ENCODE measurements at regions of chr2 and their contacts with region 1.

Region 1: DNA sequence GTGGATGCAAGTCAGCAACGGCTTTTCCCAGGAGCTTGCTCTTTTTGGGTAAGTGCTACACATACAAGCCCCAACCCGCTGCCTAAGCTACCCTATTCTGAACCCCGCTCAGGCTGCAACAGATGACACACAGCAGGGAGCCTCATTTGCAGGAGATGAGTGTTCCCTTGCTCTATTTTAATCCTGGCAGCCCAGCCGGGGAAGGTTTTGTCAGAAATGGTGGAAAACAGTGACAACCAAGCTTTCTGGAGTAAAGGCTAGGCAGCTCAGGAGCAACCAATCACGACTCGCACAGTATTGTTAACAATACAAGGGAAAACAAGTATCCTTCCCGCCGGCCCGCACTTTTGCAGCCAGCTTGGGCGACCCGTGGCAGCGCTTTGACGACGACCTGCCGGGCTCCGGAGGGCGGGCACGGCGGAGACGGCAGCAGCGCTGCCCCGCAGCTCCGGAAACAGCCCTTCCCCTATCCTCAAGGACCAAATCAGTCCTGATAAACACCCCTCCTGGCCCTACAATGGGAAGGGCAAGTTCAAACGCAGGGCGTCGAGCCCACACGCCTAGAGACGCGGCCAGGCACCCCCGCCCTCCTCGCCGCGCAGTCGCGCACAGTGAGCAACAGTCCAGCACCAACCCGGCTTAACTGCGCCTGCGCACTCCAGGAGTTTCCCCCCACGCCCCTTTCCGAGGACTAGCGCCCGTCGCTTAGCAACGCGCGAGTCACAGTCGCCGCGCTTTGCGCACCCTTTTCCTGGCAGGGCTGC is 74.3 kb upstream of the TSPYL6 start:
- DNase-seq: peak; percentile 99
- H3K4me3 ChIP-seq: peak overlapping the region; percentile 45 to 67 (median 60)
- H3K27ac ChIP-seq: peak overlapping the region; percentile 84 to 95 (median 91)
- H3K4me1 ChIP-seq: peaks cover 0 to 18% (median 12%) of the 10 kb centered on the region in 4 donors
- H3K27me3 ChIP-seq: no peaks in the 10 kb centered on the region
- CTCF ChIP-seq: no peak
- EP300 ChIP-seq: peak in 1 of 4 donors; percentile 54
- POLR2A ChIP-seq: peak; percentile 75 to 86

Region 2: DNA sequence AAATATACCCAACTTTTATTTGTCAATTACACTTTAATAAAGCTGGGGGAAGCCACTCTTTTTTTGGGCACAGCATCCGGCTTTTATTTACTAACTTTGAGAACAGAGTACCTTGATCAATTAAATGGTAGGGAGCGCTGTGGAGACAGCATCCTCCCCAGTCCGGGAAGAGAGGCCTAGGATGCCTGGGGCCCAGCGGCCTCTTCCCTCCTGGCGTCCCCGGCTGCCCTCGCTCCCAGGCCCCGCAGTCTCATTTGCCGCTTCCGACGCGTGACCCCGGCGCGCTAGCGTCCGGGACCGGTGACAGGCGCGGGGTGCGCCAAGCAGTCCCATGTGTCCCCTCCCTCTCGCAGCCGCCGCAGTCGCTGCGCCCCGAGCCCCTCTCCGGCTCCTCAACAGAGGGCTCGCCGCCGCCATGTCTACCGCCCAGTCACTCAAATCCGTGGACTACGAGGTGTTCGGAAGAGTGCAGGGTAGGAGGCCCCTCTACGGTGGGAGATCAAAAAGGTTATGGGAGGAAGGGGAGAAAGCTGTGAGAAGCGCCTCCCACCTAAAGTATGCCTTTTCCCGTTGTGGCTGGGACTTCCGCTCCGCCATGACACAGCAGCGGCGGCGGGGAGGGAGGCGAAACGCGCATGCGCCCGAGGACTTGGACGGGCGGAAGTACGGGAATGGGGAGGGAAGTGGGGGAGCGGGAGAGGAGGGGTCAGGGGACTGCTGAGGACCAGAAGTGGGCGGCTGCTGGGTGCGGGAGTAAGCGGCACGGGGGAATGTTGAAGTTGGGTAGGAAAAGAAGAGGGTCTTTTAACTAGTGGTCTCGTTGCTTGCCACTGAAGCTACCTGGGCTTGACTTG is 214.8 kb before region 1 on chr2 and contains the start of gene ACYP2:
- intact Hi-C with region 1: loop called (anchors 10 kb)
- DNase-seq: peak; percentile 98
- H3K4me3 ChIP-seq: peak within 1 kb of the TSS; percentile 60 to 78 (median 72)
- H3K27ac ChIP-seq: peak within 1 kb of the TSS; percentile 92 to 98 (median 96)
- H3K4me1 ChIP-seq: peaks cover 0 to 12% (median 5%) of the 10 kb centered on the region in 4 donors
- H3K27me3 ChIP-seq: no peaks in the 10 kb centered on the region
- CTCF ChIP-seq: peak in 2 of 4 experiments; percentile 11 to 26
- EP300 ChIP-seq: no peak
- POLR2A ChIP-seq: peak; percentile 55 to 72
- total RNA-seq, gene ACYP2: 15.8 to 32.0 (median 26.7) TPM

Region 3: GRCh38 chr2:54287532-54287931 is 42.8 kb before region 1 on chr2:
- intact Hi-C with region 1: loop called (anchors 5 kb)
- DNase-seq: peak; percentile 72
- H3K4me3 ChIP-seq: no peak overlapping the region
- H3K27ac ChIP-seq: peak overlapping the region in 2 of 4 donors; percentile 41 to 53
- H3K4me1 ChIP-seq: peaks cover 0 to 22% (median 12%) of the 10 kb centered on the region in 4 donors
- H3K27me3 ChIP-seq: no peaks in the 10 kb centered on the region
- CTCF ChIP-seq: no peak
- EP300 ChIP-seq: no peak
- POLR2A ChIP-seq: no peak

Region 4: DNA sequence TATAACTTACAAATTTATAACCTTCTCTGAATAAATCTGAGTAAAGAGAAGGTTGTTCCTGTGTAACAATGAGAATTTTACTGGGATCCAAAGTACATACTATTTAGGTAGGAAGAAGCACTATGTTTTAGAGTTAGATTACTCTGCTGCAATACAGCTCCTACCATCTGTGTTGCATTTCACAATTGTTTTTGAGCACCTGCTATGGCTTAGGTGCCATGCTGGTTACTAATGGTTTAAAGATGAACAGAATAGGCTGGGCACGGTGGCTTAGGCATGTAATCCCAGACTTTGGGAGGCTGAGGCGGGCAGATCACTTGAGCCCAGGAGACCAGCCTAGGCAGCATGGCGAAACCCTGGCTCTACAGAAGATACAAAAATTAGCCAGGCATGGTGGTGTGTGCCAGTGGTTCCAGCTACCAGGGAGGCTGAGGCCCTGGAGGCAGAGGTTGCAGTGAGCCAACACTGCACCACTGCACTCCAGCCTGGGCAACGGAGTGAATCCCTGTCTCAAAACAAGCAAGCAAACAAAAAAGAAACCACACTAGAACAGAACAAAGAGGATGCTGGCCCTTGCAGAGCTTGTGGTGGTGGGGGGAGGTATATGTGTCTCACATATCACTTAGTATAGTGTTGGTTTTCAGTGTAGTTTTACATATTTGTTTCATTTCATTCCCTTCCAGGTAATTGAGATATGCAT is 182.5 kb after region 1 on chr2:
- intact Hi-C with region 1: no loop called
- DNase-seq: no peak
- H3K4me3 ChIP-seq: no peak overlapping the region
- H3K27ac ChIP-seq: no peak overlapping the region
- H3K4me1 ChIP-seq: peaks cover 0 to 42% (median 38%) of the 10 kb centered on the region in 4 donors
- H3K27me3 ChIP-seq: no peaks in the 10 kb centered on the region
- CTCF ChIP-seq: no peak
- EP300 ChIP-seq: no peak
- POLR2A ChIP-seq: no peak